RWPE1 (cell line): ENCODE measurements at regions of chr1 and their contacts with region 1.

Region 1: DNA sequence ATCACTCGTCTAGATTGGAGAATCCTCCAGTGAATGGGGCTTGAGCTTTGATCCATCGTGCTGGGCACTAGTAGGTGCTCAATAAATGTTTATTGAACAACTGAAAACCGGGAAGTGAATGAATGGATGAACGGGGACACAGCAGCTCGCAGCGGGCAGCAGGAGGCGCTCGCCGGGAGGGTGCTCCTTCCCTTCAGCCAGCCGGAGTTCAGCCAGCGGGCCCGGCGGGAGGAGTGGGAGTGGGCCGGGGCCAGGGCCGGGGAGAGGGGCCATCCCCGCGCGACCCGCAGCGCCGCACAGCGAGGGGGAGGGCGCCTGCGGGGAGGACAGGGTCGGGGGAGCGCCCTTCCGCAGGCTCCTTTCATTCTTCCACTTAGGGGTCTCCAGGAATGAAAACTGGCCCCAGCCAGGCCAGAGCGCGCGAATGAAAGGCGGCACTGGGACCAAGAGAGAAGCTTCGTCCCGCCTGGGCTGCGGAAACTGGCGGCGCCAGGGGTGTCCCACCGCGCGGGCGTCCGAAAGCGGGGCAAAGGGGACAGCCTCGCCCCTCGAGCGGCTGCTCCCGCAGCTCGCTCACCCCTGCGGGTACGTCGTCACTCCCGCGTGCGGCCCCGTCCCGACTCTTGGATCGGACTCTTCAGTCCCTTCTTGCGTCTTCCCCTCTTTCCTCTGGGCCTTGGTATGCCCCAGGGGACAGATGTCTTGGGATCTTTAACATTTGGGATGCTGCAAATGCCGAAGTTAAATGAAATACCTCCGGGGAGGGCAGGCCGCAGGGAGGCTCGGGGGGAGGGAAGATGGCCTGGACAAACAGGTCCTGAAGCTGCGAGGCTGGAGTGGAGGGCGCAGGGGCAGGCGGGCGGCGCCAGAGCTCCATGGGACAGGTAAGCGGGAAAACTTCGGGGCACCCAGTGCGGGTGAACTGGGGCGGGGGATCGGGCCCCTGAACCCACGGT is 3.6 kb upstream of the INAVA start:
- DNase-seq: peak; percentile 67
- H3K27ac ChIP-seq: peak overlapping the region; percentile 74
- CTCF ChIP-seq: peak; percentile 38

Region 2: DNA sequence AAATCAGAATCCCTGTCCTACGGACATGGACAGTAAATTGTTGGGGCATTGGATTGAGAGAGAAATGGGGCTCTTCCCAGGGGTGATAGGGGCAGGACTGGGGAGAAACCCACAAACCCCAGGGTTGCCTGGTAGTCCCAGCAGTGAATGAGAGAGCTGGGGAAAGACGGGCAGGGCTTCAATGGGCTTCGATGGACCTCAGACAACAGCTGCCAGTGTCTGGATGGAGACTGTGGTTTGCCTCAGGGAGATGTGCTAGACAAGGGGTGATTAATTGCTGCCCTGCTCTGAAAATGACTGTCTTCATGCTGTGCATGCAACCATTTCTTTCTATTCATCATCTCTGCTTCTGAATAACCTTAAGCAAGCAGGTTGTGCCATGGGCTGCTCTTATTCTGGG is 10.9 kb before region 1 on chr1:
- CTCF ChIA-PET with region 1: interaction called, 11 read pairs
- POLR2A ChIA-PET with region 1: no interaction called
- DNase-seq: no peak
- H3K27ac ChIP-seq: no peak overlapping the region
- CTCF ChIP-seq: no peak